Dorsolateral prefrontal cortex (tissue), 120 donors: ENCODE measurements at regions of chr22 and their contacts with region 1.

Region 1: DNA sequence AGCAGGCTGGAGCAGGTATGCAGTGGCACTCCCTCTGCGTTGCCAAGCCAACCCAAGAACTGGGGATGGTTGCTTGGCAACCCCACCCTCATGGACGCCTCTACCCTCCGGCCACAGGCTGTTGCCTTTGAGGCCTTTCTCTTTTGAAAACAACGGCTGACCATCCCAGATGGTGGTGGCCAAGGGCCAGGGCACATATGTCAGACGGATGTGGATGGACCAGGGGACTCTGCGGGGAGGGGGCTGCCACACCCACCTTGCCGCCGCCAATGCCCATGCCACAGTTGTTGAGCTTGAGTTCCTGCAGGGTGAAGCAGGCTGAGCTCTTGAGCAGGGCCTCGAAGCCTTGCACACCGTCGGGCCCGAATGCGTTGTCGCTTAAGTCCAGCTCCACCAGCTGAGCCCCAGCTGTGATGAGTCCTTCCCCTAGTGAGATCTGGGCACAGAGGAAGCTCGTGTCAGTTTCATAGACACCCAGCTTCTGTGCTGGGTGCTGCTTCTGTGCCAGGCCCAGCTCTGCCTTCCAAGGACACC is 21.5 kb downstream of the RANGAP1 start:
- DNase-seq: peak; percentile 65 to 95 (median 90)
- H3K4me3 ChIP-seq: peak overlapping the region in 4 of 59 donors; percentile 12 to 17 (median 15)
- H3K27ac ChIP-seq: peak overlapping the region; percentile 67 to 98 (median 94)
- H3K27me3 ChIP-seq: no peaks in the 10 kb centered on the region
- CTCF ChIP-seq: peak in 2 of 56 donors; percentile 10 to 11

Region 2: GRCh38 chr22:41274856-41275255 is 10.4 kb after region 1 on chr22:
- intact Hi-C with region 1: loop called in 1 of 2 experiments (anchors 1 kb)
- DNase-seq: peak in 9 of 10 donors; percentile 48 to 84 (median 71)
- H3K4me3 ChIP-seq: peak overlapping the region in 4 of 59 donors; percentile 2 to 24 (median 6)
- H3K27ac ChIP-seq: peak overlapping the region; percentile 46 to 98 (median 89)
- H3K27me3 ChIP-seq: no peaks in the 10 kb centered on the region
- CTCF ChIP-seq: peak in 2 of 56 donors; percentile 10

Region 3: DNA sequence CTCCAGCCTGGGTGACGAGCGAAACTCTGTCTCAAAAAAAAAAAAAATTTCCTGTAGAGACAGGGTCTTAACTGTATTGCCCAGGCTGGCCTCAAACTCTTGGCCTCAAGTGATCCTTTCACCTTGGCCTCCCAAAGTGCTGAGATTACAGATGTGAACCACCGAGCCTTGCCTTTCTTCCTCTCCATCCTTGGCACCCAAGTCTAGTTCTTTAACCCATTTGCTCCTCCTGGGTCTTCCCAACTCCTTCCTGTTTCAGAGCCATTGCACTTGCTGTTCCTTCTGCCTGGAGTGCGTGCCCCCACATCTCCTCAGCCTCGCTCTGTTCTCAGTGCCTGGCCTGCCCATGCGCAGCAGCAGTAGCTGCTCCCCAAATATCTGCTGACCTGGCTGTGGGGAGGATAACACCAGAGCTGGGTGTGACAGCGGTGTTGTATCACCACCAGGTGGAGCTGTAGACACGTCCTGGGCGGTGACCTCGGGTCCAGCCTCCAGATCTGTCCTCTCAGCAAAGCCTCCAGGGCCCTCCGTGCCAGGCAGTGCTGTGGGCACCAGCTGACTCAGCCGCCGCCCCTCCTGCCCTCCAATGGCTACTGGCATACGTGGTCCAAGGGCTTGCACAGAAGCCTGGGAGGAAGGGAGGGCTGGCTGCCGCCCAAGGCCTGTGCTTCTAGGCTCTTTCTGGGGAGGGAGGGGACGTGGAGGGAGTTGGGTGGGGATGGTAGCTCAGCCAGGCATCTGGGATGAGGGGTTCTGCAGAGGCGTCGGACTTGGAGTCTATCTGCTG is 139.2 kb after region 1 on chr22:
- intact Hi-C with region 1: no loop called
- DNase-seq: peak; percentile 97 to 100 (median 98)
- H3K4me3 ChIP-seq: peak overlapping the region in 19 of 59 donors; percentile 2 to 38 (median 12)
- H3K27ac ChIP-seq: peak overlapping the region; percentile 86 to 100 (median 98)
- H3K27me3 ChIP-seq: no peaks in the 10 kb centered on the region
- CTCF ChIP-seq: peak; percentile 92 to 100 (median 99)